ENCODE measurements at regions of chr9 and their contacts with region 1.

Region 1: GRCh38 chr9:103397868-103398600 is 402.9 kb downstream of the CYLC2 start:
- DNase-seq: peak; percentile 46
- H3K4me3 Mint-ChIP-seq: no peak overlapping the region
- H3K27ac Mint-ChIP-seq: no peak overlapping the region
- H3K4me1 Mint-ChIP-seq: no peaks in the 10 kb centered on the region
- H3K27me3 Mint-ChIP-seq: peaks cover 6% of the 10 kb centered on the region

Region 2: DNA sequence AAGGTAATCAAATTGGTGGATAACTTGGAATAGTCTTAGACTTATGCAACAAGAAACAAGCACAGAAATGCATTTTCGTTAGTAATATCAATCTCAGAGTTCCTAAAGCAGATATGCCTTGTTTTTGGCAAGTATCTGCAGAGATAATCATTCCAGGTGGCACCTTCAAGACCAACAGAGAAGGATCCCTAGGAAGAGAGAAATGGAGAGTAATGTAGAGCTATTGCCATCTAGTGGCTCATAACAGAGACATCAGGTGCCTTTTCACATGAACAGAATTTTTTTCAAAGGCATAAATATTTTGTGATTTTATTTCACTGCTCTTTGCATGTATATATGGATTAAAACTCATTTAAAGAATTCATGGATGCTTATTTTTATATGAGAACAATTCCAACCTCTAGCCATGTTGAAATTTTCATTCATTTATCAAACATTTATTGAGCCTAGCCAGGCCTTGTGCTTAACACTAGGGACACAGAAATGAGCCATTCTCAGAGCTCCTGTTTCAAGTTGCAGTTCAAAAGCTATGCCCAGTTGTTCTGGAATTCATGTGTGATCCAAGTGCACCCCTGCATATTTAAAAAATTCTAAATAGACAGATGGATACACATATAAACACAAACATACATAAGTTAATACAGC is 988.5 kb after region 1 on chr9:
- CTCF ChIA-PET with region 1: no interaction called
- intact Hi-C with region 1: loop called (anchors 1 kb)
- DNase-seq: no peak
- H3K4me3 Mint-ChIP-seq: no peak overlapping the region
- H3K27ac Mint-ChIP-seq: no peak overlapping the region
- H3K4me1 Mint-ChIP-seq: no peaks in the 10 kb centered on the region
- H3K27me3 Mint-ChIP-seq: no peaks in the 10 kb centered on the region

Region 3: GRCh38 chr9:104682642-104683041 is 1284.6 kb after region 1 on chr9:
- CTCF ChIA-PET with region 1: no interaction called
- intact Hi-C with region 1: loop called (anchors 2 kb)
- DNase-seq: peak; percentile 4
- H3K4me3 Mint-ChIP-seq: no peak overlapping the region
- H3K27ac Mint-ChIP-seq: no peak overlapping the region
- H3K4me1 Mint-ChIP-seq: no peaks in the 10 kb centered on the region
- H3K27me3 Mint-ChIP-seq: no peaks in the 10 kb centered on the region